Transverse colon (tissue), 4 donors: ENCODE measurements at regions of chr9 and their contacts with region 1.

Region 1: GRCh38 chr9:125400725-125401716 is 139.4 kb downstream of the GAPVD1 start:
- DNase-seq: no peak
- H3K4me3 ChIP-seq: no peak overlapping the region
- H3K27ac ChIP-seq: no peak overlapping the region
- H3K4me1 ChIP-seq: no peaks in the 10 kb centered on the region
- H3K27me3 ChIP-seq: no peaks in the 10 kb centered on the region
- CTCF ChIP-seq: no peak
- EP300 ChIP-seq: no peak
- POLR2A ChIP-seq: no peak

Region 2: DNA sequence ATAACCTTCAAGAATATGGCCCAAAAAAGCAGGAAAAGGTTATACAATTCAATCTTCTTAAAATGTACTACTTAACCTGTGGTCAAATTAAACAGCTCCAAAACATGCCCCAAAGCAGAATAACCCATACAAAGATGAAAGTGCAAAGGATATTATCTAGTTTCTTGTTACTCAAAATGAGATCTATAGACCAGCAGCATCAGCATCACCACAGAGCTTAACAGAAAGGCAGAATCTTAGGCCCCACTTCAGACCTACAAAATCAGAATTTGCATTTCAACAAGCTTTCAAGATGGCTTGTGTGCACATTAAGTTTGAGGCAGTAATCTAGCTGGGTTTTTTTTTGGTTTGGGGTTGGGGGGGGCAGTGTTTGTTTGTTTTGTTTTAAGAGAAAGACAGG is 311.7 kb before region 1 on chr9:
- in situ Hi-C with region 1: no loop called
- intact Hi-C with region 1: no loop called
- DNase-seq: no peak
- H3K4me3 ChIP-seq: no peak overlapping the region
- H3K27ac ChIP-seq: no peak overlapping the region
- H3K4me1 ChIP-seq: peaks cover 0 to 4% (median 0%) of the 10 kb centered on the region in 4 donors
- H3K27me3 ChIP-seq: no peaks in the 10 kb centered on the region
- CTCF ChIP-seq: no peak
- EP300 ChIP-seq: no peak
- POLR2A ChIP-seq: no peak

Region 3: DNA sequence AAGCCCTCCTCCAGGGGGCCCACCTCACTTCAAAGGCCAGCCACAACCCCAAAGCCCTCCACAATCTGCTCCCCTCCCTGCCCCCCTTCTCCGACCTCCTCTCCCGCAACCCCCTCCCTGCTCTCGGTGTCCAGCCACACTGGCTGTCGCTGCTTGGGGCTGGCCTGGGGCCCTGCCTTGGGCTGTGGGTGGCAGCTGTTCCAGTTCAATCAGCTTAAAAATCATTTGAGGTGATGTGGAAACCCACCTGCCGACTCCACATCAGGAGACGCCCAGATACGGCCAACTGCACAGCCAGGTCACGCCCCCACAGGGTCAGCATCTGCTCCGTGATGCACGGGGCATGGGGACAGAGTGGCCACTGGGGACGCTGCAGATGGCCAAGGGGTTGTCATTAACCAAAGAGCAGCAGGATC is 818.6 kb after region 1 on chr9:
- in situ Hi-C with region 1: loop called in 1 of 4 experiments (anchors 5 kb)
- intact Hi-C with region 1: loop called (anchors 10 kb)
- DNase-seq: no peak
- H3K4me3 ChIP-seq: no peak overlapping the region
- H3K27ac ChIP-seq: no peak overlapping the region
- H3K4me1 ChIP-seq: no peaks in the 10 kb centered on the region
- H3K27me3 ChIP-seq: peaks cover 57% of the 10 kb centered on the region
- CTCF ChIP-seq: no peak
- EP300 ChIP-seq: no peak
- POLR2A ChIP-seq: no peak